ENCODE measurements at regions of chr14 and their contacts with region 1.

Region 1: DNA sequence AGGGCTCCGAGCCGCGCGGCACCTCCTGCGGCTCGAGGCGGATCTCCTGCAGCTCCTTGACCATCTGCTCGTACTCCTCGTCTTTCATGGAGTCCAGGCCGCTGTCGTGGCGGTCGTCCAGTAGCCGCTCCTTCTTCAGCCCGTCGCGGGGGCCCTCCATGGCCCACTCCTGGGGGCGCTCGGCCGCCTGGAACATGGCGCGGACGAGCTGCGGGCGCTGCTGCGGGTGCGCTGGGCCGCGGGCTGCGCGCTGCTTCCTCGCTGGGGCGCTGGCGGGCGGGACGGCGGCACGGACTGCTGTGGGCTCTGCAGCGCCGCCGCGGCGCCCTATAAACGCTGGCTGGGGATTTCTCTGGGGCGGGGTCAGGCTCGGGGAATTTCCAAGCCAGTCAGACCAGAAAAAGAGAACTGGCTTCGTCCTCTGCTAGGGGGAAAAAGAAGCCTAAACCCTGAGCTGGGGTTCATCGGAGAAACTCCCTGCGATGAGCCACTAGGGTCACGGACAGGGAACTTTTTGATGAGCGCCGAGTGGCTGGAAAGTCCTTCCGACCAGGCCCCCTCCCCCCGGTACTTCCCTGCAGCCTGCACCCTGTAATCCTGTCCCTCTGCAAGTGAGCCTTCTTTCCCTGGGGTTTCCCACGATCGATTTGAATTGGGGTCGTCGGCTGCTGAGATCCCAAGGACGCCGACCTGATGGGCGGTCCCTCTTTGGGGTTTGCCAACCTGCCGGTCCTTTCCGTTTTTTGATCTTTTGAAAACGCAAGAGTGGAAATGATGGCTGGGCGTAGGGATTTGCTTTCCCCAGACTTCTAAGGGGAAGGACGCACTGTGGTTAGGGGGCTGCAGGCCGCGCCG is at the start of gene NFKBIA:
- DNase-seq: peak; percentile 96
- H3K4me3 Mint-ChIP-seq: peak within 1 kb of the TSS; percentile 98
- H3K27ac Mint-ChIP-seq: peak within 1 kb of the TSS; percentile 99
- H3K4me1 Mint-ChIP-seq: peaks cover 42% of the 10 kb centered on the region
- H3K27me3 Mint-ChIP-seq: no peaks in the 10 kb centered on the region
- total RNA-seq, gene NFKBIA: 390 to 393 TPM

Region 2: DNA sequence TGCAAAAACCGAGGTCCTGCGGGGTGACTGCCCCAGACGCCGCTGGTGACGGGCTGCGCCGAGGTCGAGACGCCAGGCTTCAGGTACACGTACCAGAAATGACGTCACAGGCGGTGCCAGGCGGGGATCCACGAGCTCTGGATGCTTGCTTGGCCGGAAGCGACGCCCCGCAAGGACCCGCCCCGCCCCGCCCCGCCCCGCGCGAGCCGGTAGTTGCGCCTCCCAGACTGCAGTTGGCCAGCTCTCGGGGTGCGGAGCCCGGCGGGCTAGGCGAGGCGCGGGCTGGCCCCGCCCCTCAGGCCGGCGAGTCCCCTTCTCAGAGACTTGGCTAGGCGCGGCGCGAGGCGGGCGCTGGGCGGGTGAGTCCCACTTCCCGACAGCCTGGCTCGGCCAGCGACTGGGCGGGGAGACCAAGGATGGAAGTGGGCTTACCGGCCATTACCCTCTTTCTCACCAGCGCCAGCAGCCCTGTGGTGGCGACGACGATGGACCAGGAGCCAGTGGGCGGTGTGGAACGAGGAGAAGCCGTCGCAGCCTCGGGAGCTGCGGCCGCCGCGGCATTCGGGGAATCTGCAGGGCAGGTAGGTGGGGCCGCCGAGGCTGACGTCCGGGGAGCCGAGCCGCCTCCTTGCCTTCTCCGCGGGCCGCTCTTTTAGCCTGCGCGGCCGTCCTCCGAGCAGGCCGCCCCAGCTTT is 358.5 kb before region 1 on chr14 and contains the start of gene FAM177A1:
- CTCF ChIA-PET with region 1: interaction called, 6 read pairs
- POLR2A ChIA-PET with region 1: interaction called, 33 read pairs
- intact Hi-C with region 1: loop called (anchors 2 kb)
- DNase-seq: peak; percentile 99
- H3K4me3 Mint-ChIP-seq: peak within 1 kb of the TSS; percentile 97
- H3K27ac Mint-ChIP-seq: peak within 1 kb of the TSS; percentile 98
- H3K4me1 Mint-ChIP-seq: peaks cover 28% of the 10 kb centered on the region
- H3K27me3 Mint-ChIP-seq: no peaks in the 10 kb centered on the region
- total RNA-seq, gene FAM177A1: 48.8 to 56.8 TPM

Region 3: GRCh38 chr14:35197015-35197414 is 207.7 kb before region 1 on chr14:
- CTCF ChIA-PET with region 1: no interaction called
- POLR2A ChIA-PET with region 1: interaction called, 14 read pairs
- intact Hi-C with region 1: no loop called
- DNase-seq: no peak
- H3K4me3 Mint-ChIP-seq: no peak overlapping the region
- H3K27ac Mint-ChIP-seq: peak overlapping the region; percentile 65
- H3K4me1 Mint-ChIP-seq: peaks cover 34% of the 10 kb centered on the region
- H3K27me3 Mint-ChIP-seq: no peaks in the 10 kb centered on the region

Region 4: DNA sequence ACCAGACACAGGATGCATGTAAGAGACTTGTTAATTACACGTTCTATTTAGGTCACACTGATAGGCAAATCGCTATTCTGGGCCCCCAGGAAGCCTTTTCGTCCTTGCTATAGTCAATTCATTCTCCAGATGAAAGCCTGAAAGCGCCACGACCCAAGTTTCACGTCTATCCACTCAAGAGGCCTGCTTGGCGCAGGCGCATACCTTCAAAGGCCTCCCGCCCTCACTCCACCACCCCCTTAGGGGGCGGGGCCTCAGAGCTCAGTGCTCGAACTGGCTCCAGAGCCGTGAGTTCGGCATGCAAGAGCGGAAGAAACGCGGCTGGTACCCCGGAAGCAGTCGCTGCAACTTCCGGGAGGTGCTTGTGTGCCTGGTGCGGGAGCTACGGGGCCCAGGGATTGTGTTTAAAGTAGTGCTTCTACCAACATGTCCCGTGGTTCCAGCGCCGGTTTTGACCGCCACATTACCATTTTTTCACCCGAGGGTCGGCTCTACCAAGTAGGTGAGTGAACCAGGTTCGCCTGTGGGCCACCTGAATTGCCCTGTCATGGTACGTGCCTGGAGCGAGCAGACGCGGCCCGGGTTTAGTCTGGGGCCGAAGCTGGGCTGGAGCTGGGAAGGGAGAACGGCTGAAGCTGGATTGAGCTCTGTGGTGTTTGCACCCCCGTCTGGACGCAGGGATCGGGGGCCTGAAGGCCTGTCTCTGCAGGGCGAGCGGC is 112.5 kb before region 1 on chr14 and contains the start of gene PSMA6:
- CTCF ChIA-PET with region 1: interaction called, 33 read pairs
- POLR2A ChIA-PET with region 1: interaction called, 150 read pairs
- intact Hi-C with region 1: loop called (anchors 1 kb)
- DNase-seq: peak; percentile 100
- H3K4me3 Mint-ChIP-seq: peak within 1 kb of the TSS; percentile 99
- H3K27ac Mint-ChIP-seq: peak within 1 kb of the TSS; percentile 97
- H3K4me1 Mint-ChIP-seq: peaks cover 50% of the 10 kb centered on the region
- H3K27me3 Mint-ChIP-seq: no peaks in the 10 kb centered on the region
- total RNA-seq, gene PSMA6: 407 to 425 TPM

Region 5: GRCh38 chr14:35355981-35356841 is 48.5 kb before region 1 on chr14:
- CTCF ChIA-PET with region 1: interaction called, 4 read pairs
- POLR2A ChIA-PET with region 1: interaction called, 62 read pairs
- intact Hi-C with region 1: loop called (anchors 1 kb)
- DNase-seq: peak; percentile 76
- H3K4me3 Mint-ChIP-seq: peak overlapping the region; percentile 17
- H3K27ac Mint-ChIP-seq: peak overlapping the region; percentile 79
- H3K4me1 Mint-ChIP-seq: peaks cover 40% of the 10 kb centered on the region
- H3K27me3 Mint-ChIP-seq: no peaks in the 10 kb centered on the region

Region 6: GRCh38 chr14:35730871-35731270 is 326.2 kb after region 1 on chr14:
- CTCF ChIA-PET with region 1: no interaction called
- POLR2A ChIA-PET with region 1: no interaction called
- intact Hi-C with region 1: no loop called
- DNase-seq: no peak
- H3K4me3 Mint-ChIP-seq: no peak overlapping the region
- H3K27ac Mint-ChIP-seq: no peak overlapping the region
- H3K4me1 Mint-ChIP-seq: peaks cover 2% of the 10 kb centered on the region
- H3K27me3 Mint-ChIP-seq: no peaks in the 10 kb centered on the region